ENCODE measurements at regions of chr19 and their contacts with region 1.

Region 1: DNA sequence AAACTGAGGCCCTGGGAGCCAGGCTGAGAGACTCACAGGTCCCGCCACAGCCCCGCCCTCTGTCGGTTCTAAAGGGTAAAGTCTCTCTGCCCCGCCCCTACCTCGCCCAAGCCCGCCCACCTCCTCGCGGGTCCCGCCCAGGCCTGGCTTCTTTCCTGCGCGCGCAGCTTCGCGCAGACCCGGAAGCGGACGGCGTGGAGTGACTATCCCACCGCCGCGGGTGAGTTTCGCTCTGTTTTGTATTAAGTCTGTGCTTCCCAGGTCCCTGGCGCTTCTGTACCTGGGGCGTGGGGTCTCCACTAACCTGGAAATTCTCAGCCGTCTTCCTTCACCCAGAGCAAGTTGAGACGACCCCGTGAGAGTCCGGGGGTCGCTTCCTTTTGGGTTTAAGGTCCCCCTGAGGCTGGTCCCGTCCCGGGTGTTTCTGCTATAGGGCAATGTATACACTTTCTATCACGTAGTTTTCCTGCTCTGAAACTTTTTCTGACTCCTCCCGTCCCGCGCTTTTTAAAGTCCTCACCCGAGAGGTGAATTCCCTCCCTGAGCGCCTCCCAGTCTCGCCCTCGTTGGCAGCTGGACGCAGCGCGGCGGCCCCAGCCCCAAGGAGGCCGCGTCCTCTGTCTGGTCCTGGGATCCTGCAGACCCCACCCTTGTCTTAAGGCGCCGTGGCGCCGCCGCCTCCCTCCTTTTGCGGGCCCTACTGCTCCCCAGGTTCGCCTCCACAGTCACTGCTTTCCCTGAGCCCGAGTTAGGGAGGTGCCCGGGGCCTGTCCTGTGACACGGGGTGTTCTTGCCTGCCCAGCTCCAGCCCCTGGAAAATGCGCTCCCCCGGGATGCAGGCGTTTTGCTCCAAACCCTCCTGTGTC is at the start of gene ZNF765:
- DNase-seq: peak; percentile 72 to 98
- H3K4me3 ChIP-seq: peak within 1 kb of the TSS; percentile 88
- H3K27ac ChIP-seq: peak within 1 kb of the TSS; percentile 36
- H3K4me1 ChIP-seq: peaks cover 6% of the 10 kb centered on the region; the same call in 1 of the 2 replicates
- H3K27me3 ChIP-seq: no peaks in the 10 kb centered on the region
- CTCF ChIP-seq: peak; percentile 43
- total RNA-seq, gene ZNF765: 12.1 and 12.5 TPM in 2 replicates

Region 2: GRCh38 chr19:52269338-52270261 is 1125.6 kb before region 1 on chr19 and contains the start of gene ZNF766:
- CTCF ChIA-PET with region 1: no interaction called
- POLR2A ChIA-PET with region 1: no interaction called
- intact Hi-C with region 1: loop called (anchors 2 kb)
- DNase-seq: peak; percentile 89 to 98
- H3K4me3 ChIP-seq: peak within 1 kb of the TSS; percentile 81
- H3K27ac ChIP-seq: peak within 1 kb of the TSS; percentile 81
- H3K4me1 ChIP-seq: 0 out of 2 replicates have a peak, but pooled peaks cover 4% of the 10 kb centered on the region
- H3K27me3 ChIP-seq: no peaks in the 10 kb centered on the region
- CTCF ChIP-seq: 0 out of 2 replicates have a peak, but pooled peaks have one; percentile 8
- total RNA-seq, gene ZNF766: 18.3 and 18.8 TPM in 2 replicates

Region 3: DNA sequence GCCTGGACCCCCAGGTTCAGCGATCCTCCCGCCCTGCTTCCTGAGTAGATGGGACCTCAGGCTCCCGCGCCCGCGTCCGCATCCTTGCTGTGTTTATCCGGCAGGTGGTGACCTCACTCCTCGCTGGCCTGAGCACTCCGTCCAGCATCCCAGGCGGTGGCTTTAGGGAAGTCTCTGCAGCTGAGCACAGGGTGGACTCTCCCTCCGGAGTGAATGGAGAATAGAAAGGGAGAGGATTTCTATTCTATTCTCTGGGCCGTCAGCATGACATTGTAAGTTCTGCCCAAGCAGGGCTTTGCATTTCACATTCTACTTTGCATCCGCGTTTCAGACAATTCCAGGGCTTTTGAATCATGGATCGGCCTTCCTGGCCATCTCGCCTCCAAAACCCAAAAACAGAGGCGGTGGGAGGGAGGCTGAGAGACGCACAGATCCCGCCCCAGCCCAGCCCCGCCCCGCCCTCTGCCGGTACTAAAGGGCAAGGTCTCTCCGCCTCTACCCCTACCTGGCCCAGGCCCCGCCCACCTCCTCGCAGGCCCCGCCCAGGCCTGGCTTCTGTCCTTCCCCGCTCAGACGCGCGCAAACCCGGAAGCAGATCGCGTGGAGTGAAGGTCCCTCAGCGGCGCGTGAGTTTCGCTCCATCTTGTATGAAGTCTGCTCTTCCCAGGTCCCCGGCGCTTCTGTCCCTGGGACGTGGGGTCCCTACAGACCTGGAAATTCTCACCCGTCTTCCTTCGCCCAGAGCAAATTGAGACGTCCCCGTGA is 29.9 kb before region 1 on chr19 and contains the start of gene ZNF525:
- CTCF ChIA-PET with region 1: no interaction called
- POLR2A ChIA-PET with region 1: no interaction called
- intact Hi-C with region 1: loop called (anchors 1 kb)
- DNase-seq: peak; percentile 73 to 95
- H3K4me3 ChIP-seq: peak within 1 kb of the TSS; percentile 63
- H3K27ac ChIP-seq: peak within 1 kb of the TSS; percentile 33
- H3K4me1 ChIP-seq: 0 out of 2 replicates have a peak, but pooled peaks cover 6% of the 10 kb centered on the region
- H3K27me3 ChIP-seq: no peaks in the 10 kb centered on the region
- CTCF ChIP-seq: peak; percentile 55
- total RNA-seq, gene ZNF525: 19.7 and 21.8 TPM in 2 replicates

Region 4: DNA sequence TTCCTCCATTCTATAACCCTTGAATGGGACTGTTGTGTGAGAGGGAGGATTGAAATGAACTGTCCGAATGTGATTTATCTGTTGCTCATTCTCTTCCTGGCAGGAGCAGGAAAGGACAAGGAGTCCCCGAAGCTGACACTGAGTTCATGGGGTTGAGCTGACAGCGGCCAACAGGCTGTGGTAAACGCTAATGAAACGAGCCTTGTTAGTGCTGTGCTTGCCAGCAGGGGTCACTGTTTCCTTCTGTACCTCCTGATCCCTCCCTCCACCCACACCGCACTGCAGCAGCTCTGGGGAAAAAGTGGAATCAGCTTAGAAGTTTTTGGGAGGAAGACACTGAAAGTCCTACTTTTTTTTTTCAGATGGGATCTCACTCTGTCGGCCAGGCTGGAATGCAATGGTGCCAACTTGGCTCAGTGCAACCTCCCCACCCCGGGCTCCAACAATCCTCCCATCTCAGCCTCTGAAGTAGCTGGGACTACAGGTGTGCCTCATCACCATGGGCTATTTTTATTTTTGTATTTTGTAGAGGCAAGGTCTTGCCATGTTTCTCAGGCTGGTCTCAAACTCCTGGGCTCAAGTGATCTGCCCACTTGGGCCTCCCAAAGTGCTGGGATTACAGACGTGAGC is 29.9 kb after region 1 on chr19:
- CTCF ChIA-PET with region 1: no interaction called
- POLR2A ChIA-PET with region 1: no interaction called
- intact Hi-C with region 1: no loop called
- DNase-seq: peak; percentile 37
- H3K4me3 ChIP-seq: no peak overlapping the region
- H3K27ac ChIP-seq: no peak overlapping the region
- H3K4me1 ChIP-seq: no peaks in the 10 kb centered on the region
- H3K27me3 ChIP-seq: no peaks in the 10 kb centered on the region
- CTCF ChIP-seq: peak; percentile 62

Measured in PC-9 (cell line).